ENCODE measurements at regions of chr3 and their contacts with region 1.

Region 1: DNA sequence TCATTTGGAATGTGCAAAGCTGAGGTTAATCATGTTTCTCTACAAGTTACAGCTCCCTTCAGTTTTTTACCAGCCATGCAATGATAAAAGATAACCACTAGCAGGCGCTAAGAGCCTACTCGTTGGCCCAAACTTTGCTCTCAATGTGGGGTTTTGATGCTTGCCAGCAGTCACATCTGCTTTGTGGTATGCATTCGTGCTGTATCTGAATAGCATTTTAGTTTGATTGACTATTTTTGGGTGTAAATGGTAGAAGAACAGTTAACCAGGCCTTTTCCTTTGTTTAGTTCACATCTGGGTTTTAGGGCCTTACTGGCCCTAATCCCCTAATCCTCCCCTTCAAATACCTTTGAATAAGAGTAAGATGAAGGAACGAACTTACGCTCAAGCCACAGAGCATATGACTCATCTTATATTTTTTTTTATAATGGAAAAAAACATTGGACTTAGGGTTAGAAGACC is 4.4 kb upstream of the CLDN11 start:
- DNase-seq: peak; percentile 65
- ATAC-seq: peak; percentile 58
- H3K4me3 ChIP-seq: no peak overlapping the region
- H3K4me3 Mint-ChIP-seq: no peak overlapping the region
- H3K27ac ChIP-seq: no peak overlapping the region
- H3K27ac Mint-ChIP-seq: no peak overlapping the region
- H3K4me1 ChIP-seq: peaks cover 10 to 11% of the 10 kb centered on the region in 2 donors
- H3K4me1 Mint-ChIP-seq: peaks cover 10% of the 10 kb centered on the region
- H3K27me3 ChIP-seq: peaks cover 0 to 18% (median 12%) of the 10 kb centered on the region in 4 experiments
- H3K27me3 Mint-ChIP-seq: peaks cover 22% of the 10 kb centered on the region
- CTCF ChIP-seq: peak; percentile 92

Region 2: GRCh38 chr3:169764452-169765274 is 649.6 kb before region 1 on chr3 and contains the start of gene TERC:
- CTCF ChIA-PET with region 1: interaction called, 10 read pairs
- POLR2A ChIA-PET with region 1: no interaction called
- intact Hi-C with region 1: loop called (anchors 5 kb)
- DNase-seq: peak; percentile 95
- ATAC-seq: peak; percentile 82
- H3K4me3 ChIP-seq: peak within 1 kb of the TSS; percentile 70 to 100 (median 87)
- H3K4me3 Mint-ChIP-seq: peak within 1 kb of the TSS; percentile 100
- H3K27ac ChIP-seq: peak within 1 kb of the TSS; percentile 95 to 98
- H3K27ac Mint-ChIP-seq: peak within 1 kb of the TSS; percentile 100
- H3K4me1 ChIP-seq: peaks cover 11 to 17% of the 10 kb centered on the region in 2 donors
- H3K4me1 Mint-ChIP-seq: peaks cover 24% of the 10 kb centered on the region
- H3K27me3 ChIP-seq: no peaks in the 10 kb centered on the region
- H3K27me3 Mint-ChIP-seq: no peaks in the 10 kb centered on the region
- CTCF ChIP-seq: no peak
- total RNA-seq, gene TERC: 10.6 and 12.5 TPM in 2 replicates

Region 3: DNA sequence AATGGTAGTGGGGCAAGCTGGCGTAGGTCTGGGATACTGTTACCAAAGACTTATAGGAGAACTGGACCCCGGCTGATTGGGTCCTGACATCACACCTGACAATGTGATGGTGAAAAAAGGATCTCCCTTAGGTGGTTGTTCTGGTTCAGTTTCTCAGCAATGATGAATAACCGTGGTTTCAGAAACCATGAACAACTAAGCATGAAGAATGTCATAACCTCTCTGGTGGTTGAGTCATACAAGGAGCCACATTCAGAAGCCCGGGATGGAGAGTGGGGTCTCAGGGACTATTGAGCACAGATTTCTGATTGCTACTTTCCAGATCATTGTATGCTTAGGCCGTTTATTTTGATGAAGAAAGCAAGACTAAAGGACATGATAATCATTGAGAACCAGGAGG is 359.0 kb before region 1 on chr3:
- CTCF ChIA-PET with region 1: no interaction called
- POLR2A ChIA-PET with region 1: no interaction called
- intact Hi-C with region 1: no loop called
- DNase-seq: no peak
- ATAC-seq: peak; percentile 37
- H3K4me3 ChIP-seq: peak overlapping the region in 2 of 5 experiments; percentile 18 to 21
- H3K4me3 Mint-ChIP-seq: peak overlapping the region; percentile 82
- H3K27ac ChIP-seq: no peak overlapping the region
- H3K27ac Mint-ChIP-seq: peak overlapping the region; percentile 67
- H3K4me1 ChIP-seq: peaks cover 23 to 25% of the 10 kb centered on the region in 2 donors
- H3K4me1 Mint-ChIP-seq: peaks cover 41% of the 10 kb centered on the region
- H3K27me3 ChIP-seq: no peaks in the 10 kb centered on the region
- H3K27me3 Mint-ChIP-seq: no peaks in the 10 kb centered on the region
- CTCF ChIP-seq: no peak

Region 4: DNA sequence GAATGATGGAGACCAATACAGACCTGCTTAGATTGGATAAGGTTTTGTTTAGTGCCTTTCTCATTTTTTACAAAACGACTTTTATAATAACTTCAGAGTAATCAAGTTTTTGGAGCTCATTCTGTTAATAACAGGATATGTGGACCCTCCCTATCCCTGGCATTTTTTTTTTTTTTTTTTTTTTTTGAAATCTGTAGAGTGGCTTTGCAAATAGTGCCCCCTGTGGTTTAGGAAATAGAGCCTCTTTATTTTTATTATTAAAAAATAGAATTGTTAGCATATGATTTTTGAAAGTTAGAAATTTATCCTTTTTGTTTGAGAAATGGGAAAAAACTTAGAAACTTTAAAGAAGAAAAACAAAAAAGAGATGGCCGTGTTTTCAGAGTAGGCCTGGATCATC is 45.3 kb before region 1 on chr3:
- CTCF ChIA-PET with region 1: interaction called, 7 read pairs
- POLR2A ChIA-PET with region 1: no interaction called
- intact Hi-C with region 1: loop called (anchors 5 kb)
- DNase-seq: no peak
- ATAC-seq: no peak
- H3K4me3 ChIP-seq: no peak overlapping the region
- H3K4me3 Mint-ChIP-seq: peak overlapping the region; percentile 44
- H3K27ac ChIP-seq: no peak overlapping the region
- H3K27ac Mint-ChIP-seq: no peak overlapping the region
- H3K4me1 ChIP-seq: peaks cover 42 to 55% of the 10 kb centered on the region in 2 donors
- H3K4me1 Mint-ChIP-seq: peaks cover 63% of the 10 kb centered on the region
- H3K27me3 ChIP-seq: no peaks in the 10 kb centered on the region
- H3K27me3 Mint-ChIP-seq: no peaks in the 10 kb centered on the region
- CTCF ChIP-seq: peak; percentile 44

Region 5: GRCh38 chr3:170387950-170388349 is 26.3 kb before region 1 on chr3:
- CTCF ChIA-PET with region 1: interaction called, 13 read pairs
- POLR2A ChIA-PET with region 1: interaction called, 10 read pairs
- intact Hi-C with region 1: no loop called
- DNase-seq: no peak
- ATAC-seq: no peak
- H3K4me3 ChIP-seq: no peak overlapping the region
- H3K4me3 Mint-ChIP-seq: no peak overlapping the region
- H3K27ac ChIP-seq: no peak overlapping the region
- H3K27ac Mint-ChIP-seq: no peak overlapping the region
- H3K4me1 ChIP-seq: peaks cover 7 to 10% of the 10 kb centered on the region in 2 donors
- H3K4me1 Mint-ChIP-seq: peaks cover 28% of the 10 kb centered on the region
- H3K27me3 ChIP-seq: no peaks in the 10 kb centered on the region
- H3K27me3 Mint-ChIP-seq: no peaks in the 10 kb centered on the region
- CTCF ChIP-seq: no peak

Region 6: DNA sequence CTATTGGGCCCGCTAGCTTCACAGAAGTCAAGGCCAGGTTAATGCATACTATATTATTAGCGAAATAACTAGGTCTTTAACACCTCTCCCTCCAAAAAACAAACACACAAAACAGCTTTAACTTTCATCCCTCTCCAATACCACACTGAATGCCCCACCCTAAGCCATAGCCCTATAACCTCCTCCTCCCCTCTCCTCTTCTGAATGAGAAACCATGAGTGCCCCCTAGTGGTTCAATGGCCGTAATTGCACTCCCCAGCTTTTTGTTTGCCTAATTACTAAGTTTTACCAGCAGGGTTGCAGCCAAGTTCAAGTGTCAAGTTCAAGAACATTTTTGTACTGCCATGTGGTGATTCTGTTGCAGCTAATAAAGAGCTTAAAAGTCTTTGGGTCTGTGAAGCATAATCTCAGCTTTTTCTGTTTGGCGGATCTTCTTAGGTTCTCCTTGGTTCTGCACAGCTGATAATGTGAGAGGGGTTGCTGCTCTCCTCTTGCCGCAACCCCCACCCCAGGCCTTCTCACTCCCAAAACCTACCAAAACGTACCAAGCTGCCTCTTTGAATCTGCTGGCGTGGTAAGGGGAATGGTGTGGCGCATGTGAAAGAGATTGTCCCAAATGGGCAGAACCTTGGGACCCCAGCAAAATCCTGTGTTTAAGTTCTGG is 397.8 kb after region 1 on chr3:
- CTCF ChIA-PET with region 1: interaction called, 76 read pairs
- POLR2A ChIA-PET with region 1: no interaction called
- intact Hi-C with region 1: loop called (anchors 1 kb)
- DNase-seq: peak; percentile 80
- ATAC-seq: peak; percentile 81
- H3K4me3 ChIP-seq: no peak overlapping the region
- H3K4me3 Mint-ChIP-seq: no peak overlapping the region
- H3K27ac ChIP-seq: no peak overlapping the region
- H3K27ac Mint-ChIP-seq: no peak overlapping the region
- H3K4me1 ChIP-seq: no peaks in the 10 kb centered on the region
- H3K4me1 Mint-ChIP-seq: no peaks in the 10 kb centered on the region
- H3K27me3 ChIP-seq: no peaks in the 10 kb centered on the region
- H3K27me3 Mint-ChIP-seq: peaks cover 8% of the 10 kb centered on the region
- CTCF ChIP-seq: peak; percentile 87

Measured in B cell (primary cell).